Head of caudate nucleus (tissue), 42 donors: ENCODE measurements at regions of chr2 and their contacts with region 1.

Region 1: DNA sequence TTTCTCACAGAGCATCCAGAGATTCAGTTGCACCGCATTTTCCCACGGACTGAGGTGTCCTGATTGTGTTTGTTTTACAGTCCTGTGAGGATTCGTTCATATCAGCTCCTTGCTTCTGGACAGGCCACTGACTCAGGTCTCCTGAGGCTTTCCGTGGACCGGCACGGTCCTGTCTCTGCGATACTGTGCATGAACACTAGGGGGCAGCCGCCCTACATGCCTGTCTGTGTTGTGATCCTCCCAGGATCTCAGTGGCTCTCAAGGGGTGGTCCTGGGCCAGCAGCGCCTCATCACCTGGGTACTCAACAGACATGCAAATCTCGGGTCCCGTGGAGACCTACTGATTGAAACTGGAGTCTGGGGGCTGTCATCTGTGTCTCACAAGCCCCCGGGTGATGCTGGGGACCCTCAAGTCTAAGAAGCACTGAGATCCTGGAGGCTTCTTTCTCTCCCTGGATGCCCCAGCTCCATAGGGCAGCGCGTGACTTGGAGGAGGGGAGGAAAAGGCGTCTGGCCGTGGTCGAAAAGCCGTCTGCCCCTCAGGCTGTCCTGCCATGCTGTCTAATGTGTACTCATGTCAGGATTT is 28.9 kb downstream of the IL1R2 start:
- DNase-seq: peak; percentile 59 to 94 (median 86)

Region 2: GRCh38 chr2:101560780-101561315 is 459.8 kb before region 1 on chr2:
- intact Hi-C with region 1: no loop called
- DNase-seq: no peak

Region 3: DNA sequence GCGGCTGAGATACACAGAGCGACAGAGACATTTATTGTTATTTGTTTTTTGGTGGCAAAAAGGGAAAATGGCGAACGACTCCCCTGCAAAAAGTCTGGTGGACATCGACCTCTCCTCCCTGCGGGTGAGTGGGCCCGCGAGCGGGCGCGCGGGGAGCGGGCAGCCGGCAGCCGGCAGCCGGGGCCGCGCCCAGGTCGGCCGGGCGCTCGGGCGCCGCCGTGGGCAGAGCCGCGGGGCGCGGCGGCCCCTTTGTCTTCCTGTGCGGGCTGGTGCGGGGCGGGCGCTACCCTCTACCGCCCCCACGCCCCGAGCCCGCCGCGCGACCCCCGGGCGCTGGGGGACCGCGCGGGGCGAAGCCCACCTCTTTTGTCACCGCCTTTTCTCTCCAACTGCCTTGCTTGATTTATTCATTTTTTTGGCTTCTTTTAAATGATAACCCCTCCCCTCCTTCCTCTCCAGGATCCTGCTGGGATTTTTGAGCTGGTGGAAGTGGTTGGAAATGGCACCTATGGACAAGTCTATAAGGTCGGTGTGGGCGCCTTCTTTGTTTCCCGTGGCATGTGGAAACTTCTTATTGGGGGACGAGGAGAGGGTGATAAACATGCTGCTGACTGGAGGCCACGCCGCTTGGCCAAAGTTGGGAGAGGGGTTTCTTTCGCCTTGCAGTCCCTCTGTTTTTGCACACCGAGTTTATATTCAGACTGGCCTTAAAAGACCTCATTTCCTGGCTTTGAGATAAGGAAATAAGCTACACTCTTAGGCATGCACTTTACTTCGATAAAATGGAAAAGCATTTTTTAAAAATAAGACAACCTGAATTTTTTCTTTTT is 322.5 kb before region 1 on chr2:
- intact Hi-C with region 1: no loop called
- DNase-seq: peak in 17 of 42 donors; percentile 5 to 56 (median 34)

Region 4: GRCh38 chr2:102240640-102241370 is 220.1 kb after region 1 on chr2:
- intact Hi-C with region 1: loop called (anchors 5 kb)
- DNase-seq: peak; percentile 76 to 96 (median 91)